CD4-positive, alpha-beta memory T cell (primary cell): ENCODE measurements at regions of chr3 and their contacts with region 1.

Region 1: DNA sequence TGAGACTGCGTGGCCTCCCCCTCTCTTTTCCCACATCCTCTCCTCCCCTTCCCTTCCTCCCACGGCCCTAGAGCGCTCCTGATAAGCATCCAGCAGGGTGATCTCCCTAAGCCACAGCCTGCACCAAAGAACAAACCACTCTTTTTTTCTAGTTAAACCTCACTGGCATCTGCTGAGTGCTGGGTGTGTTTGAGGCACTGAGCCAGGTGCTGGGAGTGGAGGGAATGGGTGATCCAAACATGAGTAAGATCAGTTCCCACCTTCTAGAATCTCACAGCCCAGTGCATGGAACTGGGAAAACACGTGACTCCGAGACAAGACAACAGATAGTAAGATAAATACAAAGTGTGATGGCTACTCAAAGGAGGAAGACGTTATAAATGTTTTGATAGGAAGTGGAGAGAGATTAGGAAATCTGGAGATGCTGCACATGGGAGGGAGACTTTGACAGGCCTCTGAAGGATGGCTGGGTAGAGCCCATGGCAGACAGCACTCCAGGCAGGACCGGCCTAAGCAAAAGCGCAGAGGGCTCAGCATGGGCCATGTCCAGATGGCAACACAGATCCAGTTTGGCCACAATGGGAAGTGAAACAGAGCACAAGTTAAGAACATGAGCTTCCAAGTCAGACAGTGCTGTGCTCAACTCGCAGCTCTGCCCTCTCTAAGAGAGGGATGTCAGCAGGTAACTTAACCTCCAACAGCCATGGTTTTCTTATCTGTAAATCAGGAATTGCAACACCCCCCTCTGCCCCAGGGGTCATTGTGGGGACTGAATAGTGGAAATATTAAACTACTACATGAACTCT is 55.6 kb downstream of the CCR3 start:
- DNase-seq: no peak
- H3K4me3 ChIP-seq: no peak overlapping the region
- H3K4me3 Mint-ChIP-seq: peak overlapping the region in 7 of 8 donors; percentile 3 to 79 (median 37)
- H3K27ac ChIP-seq: peak overlapping the region; percentile 25
- H3K27ac Mint-ChIP-seq: peak overlapping the region; percentile 69 to 91 (median 79)
- H3K4me1 ChIP-seq: peaks cover 86% of the 10 kb centered on the region
- H3K4me1 Mint-ChIP-seq: peaks cover 68 to 97% (median 86%) of the 10 kb centered on the region in 4 donors
- H3K27me3 ChIP-seq: no peaks in the 10 kb centered on the region
- H3K27me3 Mint-ChIP-seq: no peaks in the 10 kb centered on the region

Region 2: GRCh38 chr3:45972534-45973402 is 325.1 kb before region 1 on chr3:
- CTCF ChIA-PET with region 1: no interaction called
- POLR2A ChIA-PET with region 1: no interaction called
- intact Hi-C with region 1: no loop called
- DNase-seq: no peak
- H3K4me3 ChIP-seq: no peak overlapping the region
- H3K4me3 Mint-ChIP-seq: peak overlapping the region in 4 of 8 donors; percentile 20 to 54 (median 28)
- H3K27ac ChIP-seq: no peak overlapping the region
- H3K27ac Mint-ChIP-seq: peak overlapping the region; percentile 63 to 90 (median 75)
- H3K4me1 ChIP-seq: peaks cover 75% of the 10 kb centered on the region
- H3K4me1 Mint-ChIP-seq: peaks cover 40 to 91% (median 66%) of the 10 kb centered on the region in 4 donors
- H3K27me3 ChIP-seq: no peaks in the 10 kb centered on the region
- H3K27me3 Mint-ChIP-seq: no peaks in the 10 kb centered on the region

Region 3: GRCh38 chr3:46284981-46285683 is 12.7 kb before region 1 on chr3:
- CTCF ChIA-PET with region 1: interaction called, 14 read pairs
- POLR2A ChIA-PET with region 1: interaction called, 55 read pairs
- intact Hi-C with region 1: no loop called
- DNase-seq: peak; percentile 63 to 92 (median 69)
- H3K4me3 ChIP-seq: no peak overlapping the region
- H3K4me3 Mint-ChIP-seq: peak overlapping the region in 7 of 8 donors; percentile 4 to 73 (median 62)
- H3K27ac ChIP-seq: peak overlapping the region; percentile 41
- H3K27ac Mint-ChIP-seq: peak overlapping the region; percentile 59 to 93 (median 87)
- H3K4me1 ChIP-seq: peaks cover 78% of the 10 kb centered on the region
- H3K4me1 Mint-ChIP-seq: peaks cover 56 to 92% (median 66%) of the 10 kb centered on the region in 4 donors
- H3K27me3 ChIP-seq: no peaks in the 10 kb centered on the region
- H3K27me3 Mint-ChIP-seq: no peaks in the 10 kb centered on the region